Activated T-helper 2 cell treated with anti-CD3 and anti-CD28 coated beads, Interferon-gamma antibody, Interleukin-2, Interleukin-4, amounts not matched to agents 10 μg/mL and 5 μg/mL and 100 μg/mL, durations not matched to agents 14 hours and 24 hours and 36 hours (primary cell): ENCODE measurements at regions of chr14 and their contacts with region 1.

Region 1: GRCh38 chr14:61252369-61253063 is 28.6 kb downstream of the TMEM30B start:
- DNase-seq: peak; percentile 50
- H3K4me3 Mint-ChIP-seq: no peak overlapping the region
- H3K27ac Mint-ChIP-seq: no peak overlapping the region
- H3K4me1 Mint-ChIP-seq: peaks cover 16% of the 10 kb centered on the region
- H3K27me3 Mint-ChIP-seq: peaks cover 24% of the 10 kb centered on the region

Region 2: GRCh38 chr14:60514741-60515491 is 737.6 kb before region 1 on chr14:
- intact Hi-C with region 1: loop called (anchors 10 kb)
- DNase-seq: no peak
- H3K4me3 Mint-ChIP-seq: peak overlapping the region; percentile 13
- H3K27ac Mint-ChIP-seq: no peak overlapping the region
- H3K4me1 Mint-ChIP-seq: peaks cover 8% of the 10 kb centered on the region
- H3K27me3 Mint-ChIP-seq: peaks cover 70% of the 10 kb centered on the region

Region 3: DNA sequence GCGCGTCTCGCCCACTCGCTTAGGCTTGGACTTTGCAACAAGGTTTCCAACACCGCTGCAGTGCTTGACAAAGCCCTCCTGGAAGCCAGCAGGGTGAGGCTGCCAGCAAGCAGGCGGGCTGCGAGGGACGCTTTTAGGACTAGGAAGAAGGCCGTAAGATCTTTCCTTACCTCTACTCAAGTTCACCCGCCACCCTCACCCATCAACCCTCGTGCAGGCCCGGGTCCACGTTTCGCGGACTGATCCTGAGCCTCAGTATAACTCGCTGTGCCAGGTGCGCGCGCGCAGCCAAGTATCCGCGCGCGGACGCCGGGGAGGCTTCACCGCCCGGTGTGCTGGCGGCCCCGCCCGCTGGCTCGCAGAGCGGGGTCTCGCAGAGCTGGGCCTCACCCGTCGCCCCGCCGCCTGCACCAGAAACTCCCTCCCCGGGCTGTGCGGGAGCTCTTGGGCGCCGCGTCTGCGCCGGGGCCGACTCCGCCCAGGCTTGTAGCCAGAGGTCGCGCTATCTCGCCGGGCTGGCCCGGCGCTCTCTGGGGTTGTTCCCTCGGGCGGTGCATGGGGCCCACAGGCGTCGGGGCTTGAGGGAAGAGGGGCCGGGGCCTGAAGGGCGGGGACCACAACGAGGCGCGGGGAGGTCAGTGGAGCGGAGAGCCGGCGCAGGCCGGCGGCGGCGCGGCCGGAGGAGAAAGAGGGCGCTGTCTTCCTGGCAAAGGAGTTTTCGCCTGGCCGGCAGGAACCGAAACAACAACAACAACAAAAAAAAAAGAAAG is 595.6 kb before region 1 on chr14:
- intact Hi-C with region 1: loop called (anchors 1 kb)
- DNase-seq: no peak
- H3K4me3 Mint-ChIP-seq: peak overlapping the region; percentile 79
- H3K27ac Mint-ChIP-seq: no peak overlapping the region
- H3K4me1 Mint-ChIP-seq: peaks cover 28% of the 10 kb centered on the region
- H3K27me3 Mint-ChIP-seq: peaks cover 83% of the 10 kb centered on the region

Region 4: DNA sequence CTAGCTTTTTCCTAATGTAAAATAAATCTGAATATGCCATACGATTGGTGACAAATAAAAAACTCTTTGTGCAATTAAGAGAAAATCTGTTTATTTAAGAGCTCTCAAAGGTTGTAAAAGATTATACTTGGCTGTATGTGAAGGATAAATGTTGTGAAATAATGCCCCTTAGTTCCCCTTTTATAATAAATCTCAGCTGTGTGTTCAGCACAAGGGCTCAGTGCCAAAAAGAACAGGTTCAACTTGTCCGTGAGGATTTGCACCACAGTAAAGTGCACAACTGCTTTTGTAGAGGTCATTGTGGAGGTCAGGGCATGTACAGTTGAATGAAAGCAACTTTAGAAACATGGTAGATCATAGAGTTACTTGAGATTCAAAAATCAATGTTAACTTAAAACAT is 390.2 kb before region 1 on chr14:
- intact Hi-C with region 1: loop called (anchors 5 kb)
- DNase-seq: no peak
- H3K4me3 Mint-ChIP-seq: no peak overlapping the region
- H3K27ac Mint-ChIP-seq: no peak overlapping the region
- H3K4me1 Mint-ChIP-seq: peaks cover 7% of the 10 kb centered on the region
- H3K27me3 Mint-ChIP-seq: peaks cover 8% of the 10 kb centered on the region

Region 5: GRCh38 chr14:61034416-61035120 is 217.9 kb before region 1 on chr14:
- intact Hi-C with region 1: loop called (anchors 2 kb)
- DNase-seq: no peak
- H3K4me3 Mint-ChIP-seq: no peak overlapping the region
- H3K27ac Mint-ChIP-seq: peak overlapping the region; percentile 40
- H3K4me1 Mint-ChIP-seq: peaks cover 23% of the 10 kb centered on the region
- H3K27me3 Mint-ChIP-seq: no peaks in the 10 kb centered on the region

Region 6: DNA sequence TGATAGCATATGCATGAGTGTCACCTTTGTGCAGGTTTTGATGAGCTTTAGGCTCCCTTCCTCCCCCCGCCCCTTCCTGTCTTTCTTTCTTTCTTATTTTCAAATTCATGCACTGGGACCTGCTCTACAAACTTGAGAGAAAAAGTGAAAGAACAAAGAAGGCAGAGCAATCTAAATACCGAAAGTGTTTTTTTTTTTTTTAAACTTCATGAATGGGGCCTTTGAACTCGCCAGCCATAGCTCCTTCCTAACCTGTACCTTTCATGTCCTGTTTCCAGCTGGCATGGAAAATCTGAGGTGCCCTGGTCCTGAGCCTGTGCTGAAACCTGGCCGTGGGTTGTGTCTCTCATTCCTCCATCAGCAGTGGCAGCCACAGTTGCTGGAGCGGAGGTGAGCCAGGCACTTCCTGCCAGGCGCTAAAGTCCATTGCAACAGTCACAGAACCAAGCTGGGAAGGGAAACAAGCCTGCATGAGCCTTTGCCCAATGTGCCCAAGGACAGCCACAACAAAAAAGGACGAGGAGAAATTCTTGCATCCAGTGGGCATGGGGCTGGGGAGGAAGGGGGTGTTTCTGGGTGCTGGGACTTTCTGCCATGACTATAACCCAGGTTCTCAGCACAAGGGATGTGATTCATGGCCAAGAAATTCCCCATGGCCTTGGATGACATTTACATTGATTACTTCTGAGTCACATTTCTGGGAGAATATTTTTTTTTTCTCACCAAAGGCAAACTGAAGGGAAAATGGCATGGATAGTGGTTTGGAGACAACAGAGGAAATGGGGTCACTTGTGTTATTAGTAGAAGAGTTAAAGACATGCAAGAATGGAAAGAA is 74.1 kb before region 1 on chr14:
- intact Hi-C with region 1: loop called (anchors 1 kb)
- DNase-seq: no peak
- H3K4me3 Mint-ChIP-seq: peak overlapping the region; percentile 61
- H3K27ac Mint-ChIP-seq: peak overlapping the region; percentile 87
- H3K4me1 Mint-ChIP-seq: peaks cover 53% of the 10 kb centered on the region
- H3K27me3 Mint-ChIP-seq: no peaks in the 10 kb centered on the region